Activated CD8-positive, alpha-beta T cell treated with anti-CD3 and anti-CD28 coated beads, Interleukin-2, amount 10 ng/mL, durations not matched to agents 7 days and 5 days (primary cell): ENCODE measurements at regions of chr2 and their contacts with region 1.

Region 1: DNA sequence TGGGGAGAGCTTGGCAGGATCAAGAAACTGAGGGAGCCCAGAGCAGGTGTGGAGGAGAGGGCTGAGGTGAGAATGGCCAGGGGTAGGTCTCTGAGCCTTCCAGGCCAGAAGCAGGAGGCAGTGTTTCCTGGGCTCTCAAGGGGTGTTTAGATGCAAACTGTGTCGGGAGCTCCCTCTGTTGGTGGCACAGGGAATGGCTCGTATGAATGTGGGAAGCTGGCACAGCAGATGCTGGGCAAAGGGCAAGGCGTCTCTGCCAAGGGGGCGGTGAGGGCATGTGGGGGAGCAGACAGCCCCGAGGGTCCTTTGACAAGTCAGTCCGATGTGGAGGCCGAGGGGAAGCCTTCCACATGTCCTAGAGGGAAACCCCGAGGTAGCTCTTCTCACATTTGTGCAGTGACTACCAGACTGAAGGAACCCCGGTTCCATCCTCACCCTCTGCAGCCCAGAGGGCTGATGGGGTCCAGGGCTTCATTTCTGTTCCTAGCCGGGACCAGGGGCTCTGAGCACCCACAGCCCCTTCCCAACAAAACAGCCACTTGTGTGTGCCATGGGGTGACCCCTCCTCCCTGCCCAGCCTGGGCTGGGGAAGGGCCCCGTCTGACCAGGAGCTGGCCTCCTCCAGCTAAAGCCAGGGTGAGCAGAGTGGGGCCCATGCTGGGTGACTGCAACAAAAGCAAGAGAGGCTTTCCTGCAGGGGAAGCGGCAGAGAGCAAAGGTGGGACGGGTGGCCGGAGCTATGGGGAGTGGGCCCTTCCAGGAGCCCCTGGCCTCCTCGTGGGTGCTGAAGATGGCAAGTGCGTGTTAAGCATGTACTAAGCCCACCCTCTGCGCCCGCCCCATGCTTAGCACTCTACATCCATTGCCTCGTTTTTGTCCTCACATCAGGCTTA is 103.4 kb downstream of the SEPTIN10 start:
- DNase-seq: peak; percentile 81
- ATAC-seq: peak; percentile 78
- H3K4me3 Mint-ChIP-seq: no peak overlapping the region
- H3K27ac Mint-ChIP-seq: no peak overlapping the region
- H3K4me1 Mint-ChIP-seq: peaks cover 9% of the 10 kb centered on the region
- H3K27me3 Mint-ChIP-seq: peaks cover 2% of the 10 kb centered on the region

Region 2: GRCh38 chr2:108853406-108853805 is 657.0 kb before region 1 on chr2:
- CTCF ChIA-PET with region 1: interaction called, 10 read pairs
- POLR2A ChIA-PET with region 1: no interaction called
- DNase-seq: no peak
- ATAC-seq: no peak
- H3K4me3 Mint-ChIP-seq: no peak overlapping the region
- H3K27ac Mint-ChIP-seq: no peak overlapping the region
- H3K4me1 Mint-ChIP-seq: no peaks in the 10 kb centered on the region
- H3K27me3 Mint-ChIP-seq: no peaks in the 10 kb centered on the region

Region 3: DNA sequence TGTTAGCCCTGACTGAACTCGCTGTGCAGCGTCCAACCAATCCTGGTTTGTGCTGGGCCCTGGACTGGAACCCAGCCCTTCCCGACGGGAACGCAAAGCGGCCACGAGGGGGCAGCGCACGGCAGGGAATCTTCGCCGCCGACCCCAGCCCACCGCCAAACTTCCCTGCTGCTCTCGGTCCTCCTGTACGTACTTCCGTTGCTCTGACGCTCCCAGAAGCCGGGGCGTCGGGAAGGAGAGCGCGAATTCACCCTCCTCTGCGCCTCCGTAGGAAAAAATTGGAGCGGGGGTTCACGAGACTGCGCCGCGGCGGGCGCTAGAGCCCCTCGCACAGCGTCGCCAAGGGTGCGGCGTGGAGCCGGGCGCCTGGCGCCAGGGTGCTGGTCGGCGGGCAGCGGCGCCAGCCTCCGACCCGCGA is 382.3 kb before region 1 on chr2:
- CTCF ChIA-PET with region 1: interaction called, 22 read pairs
- POLR2A ChIA-PET with region 1: no interaction called
- DNase-seq: peak; percentile 64
- ATAC-seq: peak; percentile 59
- H3K4me3 Mint-ChIP-seq: peak overlapping the region; percentile 68
- H3K27ac Mint-ChIP-seq: no peak overlapping the region
- H3K4me1 Mint-ChIP-seq: peaks cover 15% of the 10 kb centered on the region
- H3K27me3 Mint-ChIP-seq: peaks cover 32% of the 10 kb centered on the region

Region 4: GRCh38 chr2:109135359-109136197 is 374.8 kb before region 1 on chr2:
- CTCF ChIA-PET with region 1: interaction called, 17 read pairs
- POLR2A ChIA-PET with region 1: no interaction called
- DNase-seq: no peak
- ATAC-seq: no peak
- H3K4me3 Mint-ChIP-seq: no peak overlapping the region
- H3K27ac Mint-ChIP-seq: no peak overlapping the region
- H3K4me1 Mint-ChIP-seq: peaks cover 13% of the 10 kb centered on the region
- H3K27me3 Mint-ChIP-seq: peaks cover 22% of the 10 kb centered on the region

Region 5: DNA sequence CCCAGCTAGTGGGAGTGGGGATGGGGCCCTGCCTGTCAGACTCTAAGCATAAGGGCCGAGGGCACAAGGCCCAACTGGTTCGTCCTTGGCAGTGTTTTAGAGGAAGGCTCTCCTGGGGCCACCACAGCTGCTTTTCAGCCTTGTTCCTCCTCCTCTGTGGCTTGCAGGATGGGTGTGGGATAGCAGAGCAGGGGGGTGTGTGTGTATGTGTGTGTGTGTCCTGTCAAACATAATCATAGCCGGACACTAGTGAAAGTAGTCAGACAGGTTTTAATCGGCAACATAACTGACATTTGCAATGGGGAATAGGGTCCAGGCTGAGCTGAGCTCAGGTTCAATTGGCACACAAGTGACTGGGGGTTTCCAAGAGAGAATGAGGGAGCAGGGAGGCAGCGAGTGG is 10.8 kb before region 1 on chr2:
- CTCF ChIA-PET with region 1: interaction called, 12 read pairs
- POLR2A ChIA-PET with region 1: no interaction called
- DNase-seq: no peak
- ATAC-seq: no peak
- H3K4me3 Mint-ChIP-seq: no peak overlapping the region
- H3K27ac Mint-ChIP-seq: no peak overlapping the region
- H3K4me1 Mint-ChIP-seq: no peaks in the 10 kb centered on the region
- H3K27me3 Mint-ChIP-seq: no peaks in the 10 kb centered on the region

Region 6: DNA sequence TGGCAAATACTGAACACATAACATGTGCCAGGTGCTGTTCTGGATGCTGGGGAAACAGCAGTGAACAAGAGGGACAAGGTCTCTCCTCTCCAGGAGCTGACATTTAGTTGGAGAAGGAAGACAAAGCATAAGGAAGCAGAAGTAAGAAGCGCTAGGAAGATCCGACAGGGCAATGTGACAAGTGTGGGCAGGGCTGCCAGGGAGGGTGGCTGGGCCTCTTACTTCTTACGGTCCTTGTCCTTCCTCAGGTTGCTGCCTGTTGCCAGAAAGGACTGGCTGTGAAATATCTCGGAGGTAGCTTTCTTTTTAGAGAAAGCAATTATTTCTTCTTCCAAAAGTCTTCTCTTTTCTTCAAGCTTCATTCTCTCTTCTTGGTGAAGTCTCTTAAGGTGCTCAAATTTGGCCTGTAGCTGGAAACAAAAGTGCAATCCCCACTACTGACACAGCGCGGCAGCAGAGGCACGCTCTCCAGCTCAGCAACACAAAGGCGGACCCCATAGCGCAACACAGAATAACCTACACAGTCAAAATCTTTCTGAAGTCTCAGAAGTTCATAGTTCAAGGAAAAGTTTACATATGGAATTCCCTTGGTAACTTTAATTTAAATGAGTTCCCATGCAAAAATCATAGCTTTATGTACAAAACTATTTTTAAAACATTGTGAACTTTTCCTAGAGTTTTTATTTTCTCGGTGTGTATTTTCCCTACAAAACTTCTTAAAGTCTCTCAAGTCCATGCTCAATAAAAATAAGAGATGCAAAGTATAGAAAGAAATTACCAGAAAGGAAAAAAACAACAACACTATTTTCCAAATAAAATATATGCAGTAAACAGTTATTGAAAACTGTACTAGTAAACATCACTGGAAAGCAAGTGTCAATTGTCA is 35.7 kb after region 1 on chr2:
- CTCF ChIA-PET with region 1: interaction called, 14 read pairs
- POLR2A ChIA-PET with region 1: no interaction called
- DNase-seq: peak; percentile 64
- ATAC-seq: peak; percentile 79
- H3K4me3 Mint-ChIP-seq: no peak overlapping the region
- H3K27ac Mint-ChIP-seq: no peak overlapping the region
- H3K4me1 Mint-ChIP-seq: no peaks in the 10 kb centered on the region
- H3K27me3 Mint-ChIP-seq: peaks cover 9% of the 10 kb centered on the region

Region 7: DNA sequence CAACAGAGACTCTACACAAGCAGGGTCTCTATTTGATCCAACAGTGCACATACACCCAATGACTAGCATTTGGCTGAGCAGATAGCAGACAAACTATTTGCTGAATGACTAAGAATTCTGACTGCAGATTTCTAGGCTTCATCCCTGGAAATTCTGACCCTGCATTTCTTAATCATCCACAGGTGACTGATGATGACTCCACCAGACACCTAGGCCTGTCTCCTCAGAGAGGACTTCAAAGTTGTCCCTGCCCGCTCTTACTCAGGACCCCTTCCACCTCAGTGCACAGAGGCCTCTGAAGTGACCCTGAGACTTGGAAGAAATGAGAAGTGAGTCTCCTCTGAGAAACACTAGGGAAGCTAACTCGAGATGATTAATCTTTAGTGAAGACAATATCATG is 52.0 kb after region 1 on chr2:
- CTCF ChIA-PET with region 1: no interaction called
- POLR2A ChIA-PET with region 1: no interaction called
- DNase-seq: no peak
- ATAC-seq: no peak
- H3K4me3 Mint-ChIP-seq: no peak overlapping the region
- H3K27ac Mint-ChIP-seq: no peak overlapping the region
- H3K4me1 Mint-ChIP-seq: peaks cover 2% of the 10 kb centered on the region
- H3K27me3 Mint-ChIP-seq: peaks cover 9% of the 10 kb centered on the region